ENCODE measurements at regions of chr5 and their contacts with region 1.

Region 1: DNA sequence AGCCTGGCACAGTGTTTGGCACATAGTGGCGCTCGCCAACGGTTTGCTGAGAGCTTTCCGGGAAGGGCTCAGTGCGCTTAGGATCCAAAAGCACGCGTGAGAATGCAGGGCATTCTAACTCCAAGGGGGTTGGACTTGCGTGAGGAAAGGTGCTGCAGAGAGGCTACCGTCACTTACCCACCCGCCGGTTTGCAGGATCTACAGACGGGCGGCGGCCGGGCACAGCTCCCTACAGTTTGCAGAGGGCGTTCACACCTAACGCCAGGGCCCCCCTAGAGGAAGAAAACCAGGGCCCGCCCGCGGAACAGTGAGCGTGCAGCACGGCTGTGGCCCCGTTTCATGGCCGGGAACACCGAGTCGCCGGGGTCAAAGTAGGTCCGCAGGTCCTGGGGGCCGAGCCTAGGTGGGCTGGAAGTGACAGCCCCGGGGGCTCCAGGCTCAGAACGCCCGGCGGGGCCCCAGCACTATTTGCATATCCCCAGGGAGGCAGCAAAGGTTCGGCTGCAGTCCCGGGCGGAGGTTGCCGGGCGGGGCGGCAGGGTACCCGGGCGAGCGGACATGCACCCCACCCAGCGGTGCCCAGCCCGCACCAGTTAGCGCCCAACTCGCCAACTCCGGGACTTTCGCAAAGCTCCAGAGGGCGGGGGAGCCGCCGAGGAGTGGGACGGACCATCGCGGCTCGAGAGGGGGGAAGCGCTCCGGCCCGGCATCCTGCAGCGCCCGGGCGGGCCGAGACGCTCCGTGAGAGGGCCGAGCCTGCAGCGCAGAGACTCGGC is 526 bp upstream of the GALNT10 start:
- DNase-seq: peak; percentile 74 to 97 (median 80)

Region 2: DNA sequence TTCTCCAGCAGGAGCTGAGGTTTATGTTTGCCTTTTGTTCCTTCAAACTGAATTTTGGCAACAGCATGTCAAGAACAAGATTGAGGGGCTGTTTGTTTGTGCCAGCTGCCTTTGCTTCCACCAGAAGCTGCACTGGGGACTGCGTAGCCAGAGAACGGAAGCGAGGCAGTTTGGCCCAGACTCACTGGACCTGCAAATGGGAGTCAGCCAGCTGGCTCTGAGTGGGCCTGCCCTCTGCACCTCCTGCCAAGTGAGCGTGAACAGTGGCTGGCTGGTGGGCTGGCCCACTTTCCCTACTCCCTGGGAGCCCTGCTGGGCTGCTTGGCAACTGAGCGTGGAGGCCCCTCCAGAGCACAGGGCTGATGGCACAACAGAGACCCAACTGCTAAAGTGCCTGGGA is 112.2 kb after region 1 on chr5:
- intact Hi-C with region 1: loop called (anchors 10 kb)
- DNase-seq: peak; percentile 34 to 95 (median 70)